Activated naive CD4-positive, alpha-beta T cell treated with anti-CD3 and anti-CD28 coated beads for 36 hours (primary cell): ENCODE measurements at regions of chr9 and their contacts with region 1.

Region 1: GRCh38 chr9:72526901-72527800 is 5.7 kb downstream of the TMC1 start:
- DNase-seq: peak; percentile 92
- H3K4me3 Mint-ChIP-seq: peak overlapping the region; percentile 71
- H3K27ac Mint-ChIP-seq: peak overlapping the region; percentile 91
- H3K4me1 Mint-ChIP-seq: peaks cover 38% of the 10 kb centered on the region
- H3K27me3 Mint-ChIP-seq: no peaks in the 10 kb centered on the region

Region 2: GRCh38 chr9:72292256-72292682 is 234.9 kb before region 1 on chr9:
- CTCF ChIA-PET with region 1: no interaction called
- intact Hi-C with region 1: loop called (anchors 5 kb)
- DNase-seq: no peak
- H3K4me3 Mint-ChIP-seq: no peak overlapping the region
- H3K27ac Mint-ChIP-seq: no peak overlapping the region
- H3K4me1 Mint-ChIP-seq: peaks cover 2% of the 10 kb centered on the region
- H3K27me3 Mint-ChIP-seq: no peaks in the 10 kb centered on the region

Region 3: DNA sequence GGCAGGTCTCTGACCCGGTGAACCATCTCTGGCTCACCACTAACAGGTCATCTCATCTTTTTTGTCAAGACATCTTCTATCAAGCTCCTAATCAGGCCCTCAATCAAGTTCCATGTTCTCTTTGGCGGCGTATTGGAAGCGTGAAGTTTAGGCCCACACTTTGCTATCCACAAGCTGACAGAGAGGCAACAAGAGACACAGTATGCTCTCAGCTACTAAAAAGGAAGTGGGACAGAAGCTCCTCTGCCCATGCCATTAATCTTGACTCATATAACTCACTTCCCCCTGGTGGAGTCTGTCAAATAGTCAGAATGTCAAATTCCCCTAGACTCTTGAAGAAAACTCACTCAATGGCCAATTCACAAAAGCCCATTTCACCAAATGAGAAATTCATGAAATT is 83.3 kb before region 1 on chr9:
- CTCF ChIA-PET with region 1: no interaction called
- intact Hi-C with region 1: loop called (anchors 1 kb)
- DNase-seq: peak; percentile 12
- H3K4me3 Mint-ChIP-seq: no peak overlapping the region
- H3K27ac Mint-ChIP-seq: no peak overlapping the region
- H3K4me1 Mint-ChIP-seq: peaks cover 14% of the 10 kb centered on the region
- H3K27me3 Mint-ChIP-seq: no peaks in the 10 kb centered on the region

Region 4: GRCh38 chr9:72509635-72510034 is 17.5 kb before region 1 on chr9:
- CTCF ChIA-PET with region 1: no interaction called
- intact Hi-C with region 1: loop called (anchors 1 kb)
- DNase-seq: no peak
- H3K4me3 Mint-ChIP-seq: no peak overlapping the region
- H3K27ac Mint-ChIP-seq: peak overlapping the region; percentile 79
- H3K4me1 Mint-ChIP-seq: peaks cover 16% of the 10 kb centered on the region
- H3K27me3 Mint-ChIP-seq: no peaks in the 10 kb centered on the region

Region 5: GRCh38 chr9:72586388-72587130 is 59.4 kb after region 1 on chr9:
- CTCF ChIA-PET with region 1: no interaction called
- intact Hi-C with region 1: loop called (anchors 1 kb)
- DNase-seq: peak; percentile 50
- H3K4me3 Mint-ChIP-seq: no peak overlapping the region
- H3K27ac Mint-ChIP-seq: no peak overlapping the region
- H3K4me1 Mint-ChIP-seq: peaks cover 17% of the 10 kb centered on the region
- H3K27me3 Mint-ChIP-seq: no peaks in the 10 kb centered on the region

Region 6: GRCh38 chr9:72753266-72753893 is 226.2 kb after region 1 on chr9:
- CTCF ChIA-PET with region 1: no interaction called
- intact Hi-C with region 1: no loop called
- DNase-seq: no peak
- H3K4me3 Mint-ChIP-seq: no peak overlapping the region
- H3K27ac Mint-ChIP-seq: no peak overlapping the region
- H3K4me1 Mint-ChIP-seq: no peaks in the 10 kb centered on the region
- H3K27me3 Mint-ChIP-seq: peaks cover 10% of the 10 kb centered on the region

Region 7: GRCh38 chr9:73132034-73132776 is 605.1 kb after region 1 on chr9:
- CTCF ChIA-PET with region 1: no interaction called
- intact Hi-C with region 1: loop called (anchors 1 kb)
- DNase-seq: peak; percentile 76
- H3K4me3 Mint-ChIP-seq: peak overlapping the region; percentile 79
- H3K27ac Mint-ChIP-seq: peak overlapping the region; percentile 86
- H3K4me1 Mint-ChIP-seq: peaks cover 25% of the 10 kb centered on the region
- H3K27me3 Mint-ChIP-seq: no peaks in the 10 kb centered on the region

Region 8: DNA sequence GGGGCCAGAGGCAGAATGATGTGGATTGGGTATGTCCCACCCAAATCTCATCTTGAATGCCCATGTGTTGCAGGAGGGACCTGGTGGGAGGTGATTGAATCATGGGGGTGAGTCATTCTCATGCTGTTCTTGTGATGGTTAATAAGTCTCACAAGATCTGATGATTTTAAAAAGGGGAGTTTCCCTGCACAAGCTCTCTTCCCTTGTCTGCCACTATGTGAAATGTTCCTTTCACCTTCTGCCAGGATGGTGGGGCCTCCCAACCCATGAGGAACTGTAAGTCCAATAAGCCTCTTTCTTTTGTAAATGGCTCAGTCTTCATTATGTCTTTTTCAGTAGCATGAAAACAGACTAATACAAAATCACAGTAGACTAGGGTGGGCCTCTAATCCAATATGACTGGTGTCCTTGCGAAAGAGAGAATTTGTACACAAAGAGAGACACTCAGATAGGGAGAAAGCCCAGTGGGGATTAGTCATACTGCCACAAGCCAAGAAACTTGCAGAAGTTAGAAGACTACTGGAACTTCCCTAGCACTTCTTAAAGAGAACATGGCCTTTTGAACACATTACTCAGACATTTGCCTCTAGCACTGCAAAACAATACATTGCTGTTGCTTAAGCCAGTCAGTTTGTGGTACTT is 693.0 kb after region 1 on chr9:
- CTCF ChIA-PET with region 1: no interaction called
- intact Hi-C with region 1: loop called (anchors 1 kb)
- DNase-seq: peak; percentile 61
- H3K4me3 Mint-ChIP-seq: no peak overlapping the region
- H3K27ac Mint-ChIP-seq: peak overlapping the region; percentile 91
- H3K4me1 Mint-ChIP-seq: peaks cover 27% of the 10 kb centered on the region
- H3K27me3 Mint-ChIP-seq: peaks cover 44% of the 10 kb centered on the region